Dendritic cell treated with granulocyte-macrophage colony-stimulating factor and Interleukin-4, amounts not matched to agents 40 ng/mL and 50 ng/mL, for 4 days (primary cell): ENCODE measurements at regions of chr10 and their contacts with region 1.

Region 1: GRCh38 chr10:92240289-92241157 is 50.4 kb downstream of the CPEB3 start:
- H3K4me3 Mint-ChIP-seq: peak overlapping the region; percentile 91
- H3K27ac Mint-ChIP-seq: peak overlapping the region; percentile 97
- H3K4me1 Mint-ChIP-seq: peaks cover 47% of the 10 kb centered on the region
- H3K27me3 Mint-ChIP-seq: no peaks in the 10 kb centered on the region

Region 2: GRCh38 chr10:92208736-92209327 is 31.7 kb before region 1 on chr10:
- intact Hi-C with region 1: loop called (anchors 2 kb)
- H3K4me3 Mint-ChIP-seq: peak overlapping the region; percentile 23
- H3K27ac Mint-ChIP-seq: peak overlapping the region; percentile 41
- H3K4me1 Mint-ChIP-seq: peaks cover 10% of the 10 kb centered on the region
- H3K27me3 Mint-ChIP-seq: no peaks in the 10 kb centered on the region

Region 3: GRCh38 chr10:92219516-92219915 is 21.0 kb before region 1 on chr10:
- intact Hi-C with region 1: no loop called
- H3K4me3 Mint-ChIP-seq: no peak overlapping the region
- H3K27ac Mint-ChIP-seq: no peak overlapping the region
- H3K4me1 Mint-ChIP-seq: no peaks in the 10 kb centered on the region
- H3K27me3 Mint-ChIP-seq: no peaks in the 10 kb centered on the region

Region 4: DNA sequence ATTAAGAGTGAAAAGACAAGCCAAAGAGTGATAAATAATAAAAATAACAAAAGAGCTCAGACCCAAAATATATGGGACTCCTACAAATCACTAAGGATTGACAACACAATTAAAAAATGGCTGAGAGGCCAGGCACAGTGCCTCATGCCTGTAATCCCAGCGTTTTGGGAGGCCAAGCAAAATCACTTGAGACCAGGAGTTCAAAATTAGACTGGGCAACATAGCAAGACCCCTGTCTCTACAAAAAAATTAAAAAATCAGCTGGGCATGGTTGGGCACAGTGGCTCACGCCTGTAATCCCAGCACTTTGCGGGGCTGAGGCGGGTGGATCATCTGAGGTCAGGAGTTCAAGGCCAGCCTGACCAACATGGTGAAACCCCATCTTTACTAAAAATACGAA is 196.1 kb after region 1 on chr10:
- intact Hi-C with region 1: no loop called
- H3K4me3 Mint-ChIP-seq: no peak overlapping the region
- H3K27ac Mint-ChIP-seq: no peak overlapping the region
- H3K4me1 Mint-ChIP-seq: no peaks in the 10 kb centered on the region
- H3K27me3 Mint-ChIP-seq: no peaks in the 10 kb centered on the region

Region 5: DNA sequence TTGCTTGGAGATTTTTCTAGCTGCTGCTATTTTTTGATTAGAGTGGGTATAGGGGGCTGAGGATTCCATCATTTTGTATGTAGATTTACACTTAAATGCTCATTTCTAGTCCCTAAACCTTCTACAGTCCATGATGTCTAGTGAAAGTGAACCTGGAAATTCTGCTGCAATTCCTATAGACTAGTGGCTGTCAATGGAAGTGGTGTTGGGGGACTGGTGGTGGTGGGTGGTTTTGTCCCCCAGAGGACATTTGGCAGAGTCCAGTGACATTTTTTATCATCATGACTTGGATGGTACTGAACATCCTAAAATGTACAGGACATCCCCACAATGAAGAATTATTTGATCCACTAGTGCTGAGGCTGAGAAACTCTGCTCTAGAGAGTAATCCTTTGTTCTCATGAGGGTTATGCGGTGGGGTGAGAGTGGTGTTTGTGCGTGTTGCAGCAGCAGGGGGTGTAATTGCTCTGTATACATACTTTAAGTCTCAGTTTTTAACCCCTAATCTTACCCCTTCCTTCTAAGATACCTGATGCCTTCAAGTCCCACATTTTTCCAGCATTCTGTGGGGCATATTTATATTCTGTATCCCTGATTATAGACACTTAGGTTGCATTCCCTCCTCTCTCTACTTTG is 387.4 kb after region 1 on chr10:
- intact Hi-C with region 1: no loop called
- H3K4me3 Mint-ChIP-seq: no peak overlapping the region
- H3K27ac Mint-ChIP-seq: no peak overlapping the region
- H3K4me1 Mint-ChIP-seq: no peaks in the 10 kb centered on the region
- H3K27me3 Mint-ChIP-seq: no peaks in the 10 kb centered on the region